ENCODE measurements at regions of chr11 and their contacts with region 1.

Region 1: GRCh38 chr11:6705905-6706535 is 22.9 kb upstream of the MRPL17 start:
- DNase-seq: peak in 4 of 9 experiments; percentile 45 to 69 (median 52)
- ATAC-seq: peak; percentile 83
- H3K4me3 ChIP-seq: no peak overlapping the region
- H3K4me3 Mint-ChIP-seq: no peak overlapping the region
- H3K27ac ChIP-seq: peak overlapping the region in 1 of 2 experiments; percentile 1
- H3K27ac Mint-ChIP-seq: peak overlapping the region; percentile 80
- H3K4me1 ChIP-seq: no peaks in the 10 kb centered on the region
- H3K4me1 Mint-ChIP-seq: peaks cover 25% of the 10 kb centered on the region
- H3K27me3 ChIP-seq: no peaks in the 10 kb centered on the region
- H3K27me3 Mint-ChIP-seq: no peaks in the 10 kb centered on the region
- CTCF ChIP-seq: peak; percentile 90

Region 2: GRCh38 chr11:6022956-6023355 is 683.1 kb before region 1 on chr11:
- CTCF ChIA-PET with region 1: no interaction called
- POLR2A ChIA-PET with region 1: no interaction called
- intact Hi-C with region 1: loop called in 1 of 2 experiments (anchors 10 kb)
- DNase-seq: peak in 2 of 9 experiments; percentile 60 to 66
- ATAC-seq: no peak
- H3K4me3 ChIP-seq: no peak overlapping the region
- H3K4me3 Mint-ChIP-seq: no peak overlapping the region
- H3K27ac ChIP-seq: no peak overlapping the region
- H3K27ac Mint-ChIP-seq: no peak overlapping the region
- H3K4me1 ChIP-seq: no peaks in the 10 kb centered on the region
- H3K4me1 Mint-ChIP-seq: no peaks in the 10 kb centered on the region
- H3K27me3 ChIP-seq: no peaks in the 10 kb centered on the region
- H3K27me3 Mint-ChIP-seq: peaks cover 18% of the 10 kb centered on the region
- CTCF ChIP-seq: peak; percentile 37

Region 3: DNA sequence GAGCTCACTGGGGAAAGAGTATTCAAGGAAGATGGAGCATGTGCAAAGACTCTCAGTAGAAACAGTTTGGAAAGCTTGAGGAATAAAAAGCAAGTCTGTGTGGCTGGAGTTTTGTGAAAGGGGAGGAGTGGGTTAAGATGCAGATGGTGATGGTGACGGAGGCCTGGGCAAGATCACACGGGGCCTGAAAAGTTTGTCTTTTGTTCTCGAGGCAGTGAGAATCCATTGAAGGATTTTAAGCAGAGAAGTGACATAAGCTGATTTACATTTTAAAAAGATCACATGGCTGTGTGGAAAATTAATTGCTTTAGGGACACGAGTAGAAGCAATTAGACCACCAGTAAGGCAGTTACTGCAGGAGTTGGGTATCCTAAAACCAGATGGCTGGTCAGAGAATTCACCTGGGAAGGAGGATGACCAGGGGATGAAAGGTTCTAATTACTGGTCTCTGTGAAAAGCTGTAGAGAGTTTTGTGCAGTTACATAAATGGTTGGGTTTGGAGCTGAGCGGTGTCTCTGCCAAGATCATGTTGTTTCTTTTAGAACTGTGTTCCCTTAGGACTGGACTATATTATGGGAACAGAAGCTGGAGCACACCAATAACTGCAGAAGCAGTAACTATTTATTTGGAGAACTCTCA is 109.7 kb before region 1 on chr11:
- CTCF ChIA-PET with region 1: interaction called, 12 read pairs
- POLR2A ChIA-PET with region 1: no interaction called
- intact Hi-C with region 1: no loop called
- DNase-seq: no peak
- ATAC-seq: no peak
- H3K4me3 ChIP-seq: no peak overlapping the region
- H3K4me3 Mint-ChIP-seq: no peak overlapping the region
- H3K27ac ChIP-seq: no peak overlapping the region
- H3K27ac Mint-ChIP-seq: peak overlapping the region; percentile 57
- H3K4me1 ChIP-seq: peaks cover 3% of the 10 kb centered on the region
- H3K4me1 Mint-ChIP-seq: peaks cover 47% of the 10 kb centered on the region
- H3K27me3 ChIP-seq: no peaks in the 10 kb centered on the region
- H3K27me3 Mint-ChIP-seq: no peaks in the 10 kb centered on the region
- CTCF ChIP-seq: no peak

Region 4: GRCh38 chr11:6693342-6694228 is 12.4 kb before region 1 on chr11:
- CTCF ChIA-PET with region 1: interaction called, 23 read pairs
- POLR2A ChIA-PET with region 1: no interaction called
- intact Hi-C with region 1: no loop called
- DNase-seq: peak in 6 of 9 experiments; percentile 24 to 65 (median 33)
- ATAC-seq: peak; percentile 55
- H3K4me3 ChIP-seq: no peak overlapping the region
- H3K4me3 Mint-ChIP-seq: no peak overlapping the region
- H3K27ac ChIP-seq: peak overlapping the region in 1 of 2 experiments; percentile 56
- H3K27ac Mint-ChIP-seq: peak overlapping the region; percentile 13
- H3K4me1 ChIP-seq: peaks cover 13% of the 10 kb centered on the region
- H3K4me1 Mint-ChIP-seq: peaks cover 21% of the 10 kb centered on the region
- H3K27me3 ChIP-seq: no peaks in the 10 kb centered on the region
- H3K27me3 Mint-ChIP-seq: no peaks in the 10 kb centered on the region
- CTCF ChIP-seq: no peak

Region 5: DNA sequence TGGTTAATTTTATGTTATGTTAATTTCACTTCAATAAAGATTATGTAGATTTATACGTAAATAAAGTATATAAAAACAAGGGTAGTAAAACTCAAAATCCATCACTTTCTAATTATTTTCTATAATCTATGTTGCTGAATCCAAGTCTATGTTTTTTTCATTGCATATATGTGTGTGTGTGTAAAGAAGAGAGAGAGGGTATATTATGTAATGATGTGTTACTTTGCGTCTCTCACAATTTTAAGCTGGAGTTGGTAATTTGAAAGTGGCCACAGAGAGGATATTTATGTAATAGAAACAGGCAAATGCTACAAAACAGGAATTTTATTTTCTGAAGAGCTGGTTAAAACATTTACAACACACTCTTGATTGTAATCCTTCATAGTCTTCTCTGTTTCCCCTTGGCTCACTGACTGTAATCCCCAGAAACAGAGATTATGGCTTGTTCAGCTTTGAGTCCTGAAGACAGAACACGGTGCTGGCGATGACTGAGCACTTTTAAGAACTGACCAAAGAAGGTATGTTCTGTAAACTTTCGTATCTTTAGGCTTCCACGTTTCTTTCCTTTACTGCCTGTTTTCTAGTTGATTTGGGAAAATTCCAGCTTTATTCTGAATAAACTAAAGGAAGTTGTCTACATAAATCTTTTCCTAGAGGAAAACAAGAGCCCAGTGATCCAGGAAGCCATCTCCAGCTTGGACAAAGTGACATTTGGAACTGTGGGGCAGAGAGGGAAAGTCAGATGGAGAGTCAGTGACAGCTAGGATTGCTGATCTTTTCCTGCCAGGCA is 22.1 kb after region 1 on chr11:
- CTCF ChIA-PET with region 1: interaction called, 30 read pairs
- POLR2A ChIA-PET with region 1: no interaction called
- intact Hi-C with region 1: no loop called
- DNase-seq: no peak
- ATAC-seq: no peak
- H3K4me3 ChIP-seq: no peak overlapping the region
- H3K4me3 Mint-ChIP-seq: peak overlapping the region; percentile 22
- H3K27ac ChIP-seq: peak overlapping the region in 1 of 2 experiments; percentile 26
- H3K27ac Mint-ChIP-seq: peak overlapping the region; percentile 91
- H3K4me1 ChIP-seq: peaks cover 49% of the 10 kb centered on the region
- H3K4me1 Mint-ChIP-seq: peaks cover 76% of the 10 kb centered on the region
- H3K27me3 ChIP-seq: no peaks in the 10 kb centered on the region
- H3K27me3 Mint-ChIP-seq: no peaks in the 10 kb centered on the region
- CTCF ChIP-seq: no peak

Region 6: DNA sequence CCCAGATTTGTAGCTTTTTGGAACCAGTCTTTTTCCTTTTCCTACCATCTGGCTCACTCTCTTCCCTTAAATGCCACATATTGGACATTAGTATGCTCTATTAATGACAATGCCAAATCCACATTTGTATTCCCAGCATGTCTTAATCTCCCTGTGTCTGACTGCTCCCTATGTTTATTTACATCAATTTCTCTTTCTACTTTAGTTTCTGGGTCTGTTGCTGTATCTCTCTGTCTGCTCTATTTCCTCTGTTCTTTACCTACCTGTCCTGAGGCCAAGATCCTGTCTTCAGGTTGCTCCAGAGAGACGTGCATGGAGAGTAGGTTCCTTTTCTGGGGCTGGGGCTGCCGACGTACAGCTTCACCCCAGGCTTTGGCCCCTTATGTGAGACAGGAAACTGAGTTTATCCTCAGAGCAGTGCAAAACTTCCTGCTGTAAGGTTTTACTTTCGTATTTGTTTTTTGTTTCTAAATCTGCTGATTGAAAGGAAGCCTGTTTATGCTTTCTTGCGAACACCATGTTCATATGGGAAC is 40.1 kb after region 1 on chr11:
- CTCF ChIA-PET with region 1: interaction called, 26 read pairs
- POLR2A ChIA-PET with region 1: interaction called, 4 read pairs
- intact Hi-C with region 1: no loop called
- DNase-seq: peak in 8 of 9 experiments; percentile 26 to 82 (median 55)
- ATAC-seq: peak; percentile 84
- H3K4me3 ChIP-seq: peak overlapping the region; percentile 61 to 65
- H3K4me3 Mint-ChIP-seq: no peak overlapping the region
- H3K27ac ChIP-seq: peak overlapping the region; percentile 69 to 89
- H3K27ac Mint-ChIP-seq: no peak overlapping the region
- H3K4me1 ChIP-seq: peaks cover 57% of the 10 kb centered on the region
- H3K4me1 Mint-ChIP-seq: peaks cover 46% of the 10 kb centered on the region
- H3K27me3 ChIP-seq: no peaks in the 10 kb centered on the region
- H3K27me3 Mint-ChIP-seq: no peaks in the 10 kb centered on the region
- CTCF ChIP-seq: no peak

Region 7: GRCh38 chr11:6862961-6863360 is 156.9 kb after region 1 on chr11 and contains the start of gene OR10A2:
- CTCF ChIA-PET with region 1: no interaction called
- POLR2A ChIA-PET with region 1: no interaction called
- intact Hi-C with region 1: no loop called
- DNase-seq: no peak
- ATAC-seq: no peak
- H3K4me3 ChIP-seq: no peak within 1 kb of the TSS
- H3K4me3 Mint-ChIP-seq: no peak within 1 kb of the TSS
- H3K27ac ChIP-seq: no peak within 1 kb of the TSS
- H3K27ac Mint-ChIP-seq: no peak within 1 kb of the TSS
- H3K4me1 ChIP-seq: no peaks in the 10 kb centered on the region
- H3K4me1 Mint-ChIP-seq: no peaks in the 10 kb centered on the region
- H3K27me3 ChIP-seq: no peaks in the 10 kb centered on the region
- H3K27me3 Mint-ChIP-seq: peaks cover 3% of the 10 kb centered on the region
- CTCF ChIP-seq: no peak
- total RNA-seq, gene OR10A2: not detected

Measured in CD8-positive, alpha-beta T cell (primary cell).